ENCODE measurements at regions of chrX and their contacts with region 1.

Region 1: DNA sequence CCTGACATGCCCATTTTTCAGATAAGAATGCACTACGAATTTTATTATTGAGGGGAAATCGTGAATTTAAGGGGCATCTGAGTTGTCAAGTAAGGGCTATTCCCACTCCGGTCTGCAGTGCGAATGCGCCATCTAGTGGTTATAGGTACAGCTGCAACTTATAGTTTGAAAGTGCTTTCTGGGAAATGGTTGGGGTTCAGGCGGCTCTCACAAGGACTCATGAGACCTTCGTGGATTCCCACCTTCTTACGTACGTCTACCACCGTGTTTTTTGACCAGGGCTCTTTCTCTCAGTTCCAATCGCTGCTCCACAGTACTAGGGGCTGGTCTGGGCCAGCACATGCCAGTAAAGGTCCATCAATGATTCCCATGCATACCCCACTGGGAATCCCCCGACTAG is 12.3 kb downstream of the MSL3 start:
- DNase-seq: peak in 3 of 5 donors; percentile 31 to 50 (median 38)
- H3K4me3 ChIP-seq: no peak overlapping the region
- H3K27ac ChIP-seq: no peak overlapping the region
- H3K4me1 ChIP-seq: no peaks in the 10 kb centered on the region
- H3K27me3 ChIP-seq: no peaks in the 10 kb centered on the region
- CTCF ChIP-seq: peak; percentile 29 to 74 (median 60)
- EP300 ChIP-seq: no peak
- POLR2A ChIP-seq: no peak

Region 2: DNA sequence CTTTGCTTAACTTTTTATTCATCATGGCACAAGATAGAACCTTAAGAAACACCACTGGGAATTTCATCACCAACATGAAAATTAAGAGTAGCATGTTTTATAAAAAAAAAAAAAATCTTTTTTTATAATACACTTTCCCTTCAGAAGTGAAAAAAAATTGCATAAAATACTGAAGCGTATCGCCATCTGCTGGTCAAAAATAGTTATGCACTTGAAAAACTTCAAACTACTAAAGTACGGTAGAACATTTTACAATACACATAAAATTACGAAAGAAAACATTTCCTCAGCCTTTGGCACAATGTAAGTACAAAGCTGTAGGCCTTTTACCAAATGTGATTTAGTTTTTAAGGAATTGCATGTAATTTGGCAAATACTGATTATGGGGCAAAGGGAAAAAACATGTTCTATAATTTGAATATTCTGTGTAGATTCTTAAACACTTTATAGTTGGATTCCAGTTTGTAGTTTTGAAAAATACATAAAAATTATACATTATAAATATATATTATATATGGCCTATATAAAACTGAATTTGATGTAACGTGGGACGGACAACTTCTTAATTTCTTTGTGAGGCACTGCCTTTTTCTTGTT is 632.7 kb before region 1 on chrX:
- intact Hi-C with region 1: loop called in 3 of 4 experiments (anchors 10 kb)
- DNase-seq: no peak
- H3K4me3 ChIP-seq: no peak overlapping the region
- H3K27ac ChIP-seq: no peak overlapping the region
- H3K4me1 ChIP-seq: no peaks in the 10 kb centered on the region
- H3K27me3 ChIP-seq: no peaks in the 10 kb centered on the region
- CTCF ChIP-seq: peak; percentile 26 to 32 (median 30)
- EP300 ChIP-seq: no peak
- POLR2A ChIP-seq: no peak

Region 3: GRCh38 chrX:11143931-11144678 is 626.2 kb before region 1 on chrX:
- intact Hi-C with region 1: loop called in 3 of 4 experiments (anchors 10 kb)
- DNase-seq: peak; percentile 31 to 69 (median 35)
- H3K4me3 ChIP-seq: no peak overlapping the region
- H3K27ac ChIP-seq: no peak overlapping the region
- H3K4me1 ChIP-seq: no peaks in the 10 kb centered on the region
- H3K27me3 ChIP-seq: no peaks in the 10 kb centered on the region
- CTCF ChIP-seq: peak; percentile 15 to 70 (median 51)
- EP300 ChIP-seq: no peak
- POLR2A ChIP-seq: no peak

Region 4: GRCh38 chrX:11724122-11725017 is 46.0 kb before region 1 on chrX:
- intact Hi-C with region 1: loop called in 1 of 4 experiments (anchors 5 kb)
- DNase-seq: peak in 2 of 5 donors; percentile 32 to 47
- H3K4me3 ChIP-seq: no peak overlapping the region
- H3K27ac ChIP-seq: no peak overlapping the region
- H3K4me1 ChIP-seq: no peaks in the 10 kb centered on the region
- H3K27me3 ChIP-seq: no peaks in the 10 kb centered on the region
- CTCF ChIP-seq: peak; percentile 48 to 76 (median 73)
- EP300 ChIP-seq: no peak
- POLR2A ChIP-seq: no peak

Region 5: GRCh38 chrX:11992271-11992670 is 222.0 kb after region 1 on chrX:
- intact Hi-C with region 1: no loop called
- DNase-seq: no peak
- H3K4me3 ChIP-seq: no peak overlapping the region
- H3K27ac ChIP-seq: no peak overlapping the region
- H3K4me1 ChIP-seq: no peaks in the 10 kb centered on the region
- H3K27me3 ChIP-seq: no peaks in the 10 kb centered on the region
- CTCF ChIP-seq: no peak
- EP300 ChIP-seq: no peak
- POLR2A ChIP-seq: no peak